Activated naive CD4-positive, alpha-beta T cell treated with anti-CD3 and anti-CD28 coated beads for 36 hours (primary cell): ENCODE measurements at regions of chrX and their contacts with region 1.

Region 1: DNA sequence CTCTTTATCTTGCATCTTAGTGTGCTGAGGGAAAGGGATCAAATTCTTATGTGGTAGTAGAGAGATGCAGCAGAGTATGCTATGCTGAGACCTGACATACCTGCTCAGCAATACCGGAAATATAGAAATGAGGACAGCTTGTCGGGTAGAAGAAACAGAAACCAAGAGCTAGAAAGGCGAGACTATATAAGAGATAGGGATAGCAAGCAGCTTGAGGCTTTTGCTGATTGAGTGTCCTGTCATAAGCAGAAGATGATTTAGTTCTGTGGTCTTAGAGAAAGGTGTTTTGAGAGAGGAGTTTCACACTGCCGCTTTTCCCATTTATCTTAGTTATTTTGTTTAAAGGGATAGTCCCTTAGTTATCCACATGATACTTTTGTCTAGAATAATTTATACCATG is 31.7 kb downstream of the USP9X start:
- DNase-seq: peak; percentile 20
- H3K4me3 Mint-ChIP-seq: peak overlapping the region; percentile 18
- H3K27ac Mint-ChIP-seq: peak overlapping the region; percentile 70
- H3K4me1 Mint-ChIP-seq: peaks cover 72% of the 10 kb centered on the region
- H3K27me3 Mint-ChIP-seq: no peaks in the 10 kb centered on the region

Region 2: GRCh38 chrX:40201329-40201885 is 915.5 kb before region 1 on chrX:
- CTCF ChIA-PET with region 1: no interaction called
- intact Hi-C with region 1: no loop called
- DNase-seq: peak; percentile 39
- H3K4me3 Mint-ChIP-seq: no peak overlapping the region
- H3K27ac Mint-ChIP-seq: no peak overlapping the region
- H3K4me1 Mint-ChIP-seq: peaks cover 13% of the 10 kb centered on the region
- H3K27me3 Mint-ChIP-seq: no peaks in the 10 kb centered on the region

Region 3: DNA sequence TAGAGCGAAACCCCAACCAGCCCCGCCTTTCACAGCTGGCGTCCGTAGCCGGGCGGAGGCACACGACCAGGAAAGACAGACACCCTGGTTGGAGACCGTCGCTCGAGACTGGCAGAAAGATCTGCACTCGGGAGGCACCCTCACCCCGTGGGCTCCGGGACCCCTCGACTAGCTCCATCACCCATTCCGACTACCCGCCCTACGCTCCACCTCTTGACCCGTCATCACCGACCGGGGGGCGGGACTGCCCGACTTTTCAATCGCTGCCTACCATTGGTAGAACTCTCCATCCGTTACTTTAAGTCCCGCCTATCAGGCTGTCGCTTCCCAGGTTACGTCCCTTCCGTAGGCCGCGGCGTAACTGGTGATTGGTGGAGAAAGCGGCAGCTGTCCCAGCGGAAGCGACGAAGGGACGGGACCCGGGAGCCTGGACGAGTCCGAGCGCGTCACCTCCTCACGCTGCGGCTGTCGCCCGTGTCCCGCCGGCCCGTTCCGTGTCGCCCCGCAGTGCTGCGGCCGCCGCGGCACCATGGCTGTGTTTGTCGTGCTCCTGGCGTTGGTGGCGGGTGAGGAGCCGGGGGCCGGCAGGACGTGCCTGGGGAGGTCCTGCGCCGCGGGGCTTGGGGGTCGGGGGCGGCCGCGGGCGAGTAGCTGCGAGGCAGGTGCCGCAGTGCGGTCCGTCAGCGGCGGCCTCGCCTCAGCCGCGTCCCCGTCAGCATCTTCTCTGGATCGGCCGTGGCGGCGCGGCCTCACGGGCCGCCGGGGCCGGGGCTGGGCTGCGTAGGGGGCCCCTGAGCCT is 536.2 kb before region 1 on chrX and contains the start of gene ATP6AP2:
- CTCF ChIA-PET with region 1: no interaction called
- intact Hi-C with region 1: loop called (anchors 10 kb)
- DNase-seq: peak; percentile 95
- H3K4me3 Mint-ChIP-seq: peak within 1 kb of the TSS; percentile 83
- H3K27ac Mint-ChIP-seq: peak within 1 kb of the TSS; percentile 85
- H3K4me1 Mint-ChIP-seq: peaks cover 26% of the 10 kb centered on the region
- H3K27me3 Mint-ChIP-seq: no peaks in the 10 kb centered on the region
- total RNA-seq, gene ATP6AP2: 47.4 to 53.9 TPM

Region 4: GRCh38 chrX:40735325-40736169 is 381.4 kb before region 1 on chrX and contains the start of gene MED14:
- CTCF ChIA-PET with region 1: no interaction called
- intact Hi-C with region 1: loop called (anchors 5 kb)
- DNase-seq: peak; percentile 90
- H3K4me3 Mint-ChIP-seq: peak within 1 kb of the TSS; percentile 85
- H3K27ac Mint-ChIP-seq: peak within 1 kb of the TSS; percentile 97
- H3K4me1 Mint-ChIP-seq: peaks cover 43% of the 10 kb centered on the region
- H3K27me3 Mint-ChIP-seq: no peaks in the 10 kb centered on the region
- total RNA-seq, gene MED14: 47.3 to 50.8 TPM

Region 5: DNA sequence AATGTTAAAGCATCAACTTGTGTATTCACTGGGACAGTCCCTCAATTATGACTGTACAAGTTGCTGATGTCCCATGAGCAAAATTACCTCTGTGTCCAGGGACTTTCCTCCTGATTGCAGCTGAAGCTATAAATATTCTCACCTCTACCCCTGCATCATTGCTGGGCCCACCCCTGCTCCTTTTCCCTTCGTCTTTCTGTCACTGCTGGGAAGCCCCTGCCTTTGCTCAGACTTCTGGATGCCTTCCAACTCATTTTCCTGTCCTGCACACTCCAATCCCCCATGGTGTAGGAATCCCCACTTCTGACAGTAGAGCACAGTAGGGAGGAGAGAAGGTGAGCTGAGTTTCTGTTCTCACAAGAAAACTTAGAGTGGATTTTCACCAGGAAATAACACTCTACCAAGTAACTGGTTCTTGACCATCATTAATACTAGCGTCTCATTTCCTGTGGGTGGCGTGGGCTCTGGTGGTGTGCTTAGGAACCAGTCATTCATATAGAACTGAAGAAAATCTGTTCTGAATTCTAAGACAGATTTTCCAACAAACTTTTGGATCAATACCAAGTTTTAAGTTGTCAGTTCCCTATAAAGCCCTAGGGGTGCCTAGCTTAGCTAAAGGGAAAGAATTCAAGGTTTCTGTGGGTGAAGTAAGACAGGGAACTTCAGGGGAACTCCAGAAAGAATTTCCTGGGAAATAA is 245.4 kb before region 1 on chrX:
- CTCF ChIA-PET with region 1: interaction called, 6 read pairs
- intact Hi-C with region 1: loop called (anchors 1 kb)
- DNase-seq: peak; percentile 72
- H3K4me3 Mint-ChIP-seq: no peak overlapping the region
- H3K27ac Mint-ChIP-seq: peak overlapping the region; percentile 88
- H3K4me1 Mint-ChIP-seq: peaks cover 12% of the 10 kb centered on the region
- H3K27me3 Mint-ChIP-seq: no peaks in the 10 kb centered on the region

Region 6: DNA sequence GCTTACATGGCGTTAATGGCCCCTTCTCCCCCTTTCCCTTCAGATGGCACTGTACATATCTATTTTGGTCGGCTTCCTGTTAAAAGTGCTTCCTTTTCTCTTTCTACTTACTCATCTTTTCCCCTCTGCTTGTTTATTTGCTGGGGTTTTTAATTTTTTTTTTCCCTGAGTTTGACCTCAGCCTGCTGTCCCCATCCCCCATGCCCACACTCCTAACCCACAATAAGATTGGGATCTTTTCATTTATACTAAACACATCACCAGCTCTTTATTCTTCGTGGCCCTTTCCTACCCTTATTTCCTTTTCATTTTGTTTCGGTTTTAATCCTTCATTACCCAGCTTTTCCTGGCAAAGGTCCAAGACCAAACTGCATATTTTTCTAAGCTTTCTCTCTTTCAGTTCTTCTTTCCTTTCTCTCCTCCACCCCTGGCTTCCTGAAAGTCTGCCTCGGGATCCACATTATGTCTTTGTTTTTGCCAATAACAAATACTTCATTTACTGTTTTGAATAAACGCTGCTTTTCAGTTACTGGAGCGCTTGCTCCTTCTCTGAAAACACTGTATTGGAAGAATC is 183.7 kb before region 1 on chrX:
- CTCF ChIA-PET with region 1: interaction called, 3 read pairs
- intact Hi-C with region 1: loop called (anchors 1 kb)
- DNase-seq: peak; percentile 26
- H3K4me3 Mint-ChIP-seq: peak overlapping the region; percentile 48
- H3K27ac Mint-ChIP-seq: peak overlapping the region; percentile 87
- H3K4me1 Mint-ChIP-seq: peaks cover 22% of the 10 kb centered on the region
- H3K27me3 Mint-ChIP-seq: no peaks in the 10 kb centered on the region

Region 7: DNA sequence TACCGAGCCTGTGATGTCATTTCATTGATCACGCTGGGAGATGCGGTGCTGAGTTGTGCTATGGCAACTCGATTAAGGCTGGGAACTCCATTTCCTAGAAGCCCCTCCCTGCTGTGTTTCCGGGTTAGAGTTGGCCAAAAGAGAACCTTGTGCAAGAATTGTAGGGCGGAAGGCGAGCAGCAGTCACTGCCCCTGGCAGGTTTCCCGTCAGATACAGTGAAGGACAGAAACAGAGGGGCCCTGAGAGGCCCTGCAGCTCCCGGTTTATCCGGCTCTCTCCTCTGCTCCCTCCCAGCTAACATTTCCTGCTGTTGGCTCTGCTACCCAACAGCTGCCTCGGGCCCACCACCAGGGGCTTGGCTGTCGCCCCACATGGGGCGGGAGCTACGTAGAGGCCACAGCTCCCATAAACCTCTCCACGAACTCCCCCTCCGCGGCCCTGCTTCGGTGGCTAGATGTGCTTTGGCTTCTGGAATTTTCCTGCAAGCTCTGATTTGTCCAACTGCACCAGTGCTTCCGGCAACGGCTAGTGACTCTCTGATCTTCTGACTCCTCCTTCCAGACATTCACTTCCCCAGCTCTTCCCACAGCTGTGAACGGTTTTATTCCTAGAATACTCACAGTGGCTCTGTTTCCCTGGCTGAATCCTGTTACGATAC is 106.6 kb before region 1 on chrX:
- CTCF ChIA-PET with region 1: no interaction called
- intact Hi-C with region 1: loop called (anchors 2 kb)
- DNase-seq: peak; percentile 78
- H3K4me3 Mint-ChIP-seq: peak overlapping the region; percentile 54
- H3K27ac Mint-ChIP-seq: peak overlapping the region; percentile 77
- H3K4me1 Mint-ChIP-seq: peaks cover 29% of the 10 kb centered on the region
- H3K27me3 Mint-ChIP-seq: no peaks in the 10 kb centered on the region

Region 8: DNA sequence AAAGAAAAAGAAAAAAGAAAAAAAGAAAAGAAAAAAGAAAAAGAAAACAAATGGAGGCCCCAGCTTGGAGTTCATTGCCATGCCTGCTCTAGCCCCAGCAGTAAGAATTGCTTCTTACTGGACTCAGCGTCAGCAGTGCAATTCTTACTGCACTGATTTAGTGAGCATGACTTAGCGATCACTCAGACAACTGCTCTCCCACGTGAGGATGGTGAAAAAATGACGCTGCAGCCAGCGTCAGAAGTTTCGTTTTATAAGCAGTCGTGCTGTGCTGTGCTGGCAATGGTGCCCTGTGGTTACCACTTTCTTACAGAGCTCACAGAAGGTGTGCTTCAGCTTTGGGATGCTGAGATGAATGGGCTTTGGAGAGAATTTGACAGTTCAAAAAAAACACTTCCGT is 148.7 kb after region 1 on chrX:
- CTCF ChIA-PET with region 1: no interaction called
- intact Hi-C with region 1: no loop called
- DNase-seq: peak; percentile 82
- H3K4me3 Mint-ChIP-seq: no peak overlapping the region
- H3K27ac Mint-ChIP-seq: no peak overlapping the region
- H3K4me1 Mint-ChIP-seq: peaks cover 8% of the 10 kb centered on the region
- H3K27me3 Mint-ChIP-seq: no peaks in the 10 kb centered on the region

Region 9: DNA sequence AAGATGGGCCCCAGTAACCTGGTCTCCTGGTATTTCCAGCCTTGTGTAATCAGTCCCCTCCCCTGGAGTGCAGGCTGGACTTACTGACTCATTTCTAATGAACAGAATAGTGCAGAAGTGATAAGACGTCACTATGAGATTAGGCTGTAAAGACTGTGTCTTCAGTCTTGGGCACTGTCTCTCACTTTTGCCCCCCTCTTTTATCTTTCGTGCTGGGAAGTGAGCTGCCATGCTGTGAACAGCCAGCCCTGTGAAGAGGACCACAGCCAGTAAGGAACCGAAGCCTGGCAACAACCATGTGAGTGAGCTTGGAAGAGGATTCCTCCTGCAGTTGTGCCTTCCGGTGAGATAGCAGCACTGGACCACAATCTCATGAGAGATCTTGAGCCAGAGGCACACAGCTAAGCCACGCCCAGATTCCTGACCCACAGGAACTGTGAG is 504.3 kb after region 1 on chrX:
- CTCF ChIA-PET with region 1: no interaction called
- intact Hi-C with region 1: no loop called
- DNase-seq: no peak
- H3K4me3 Mint-ChIP-seq: no peak overlapping the region
- H3K27ac Mint-ChIP-seq: no peak overlapping the region
- H3K4me1 Mint-ChIP-seq: no peaks in the 10 kb centered on the region
- H3K27me3 Mint-ChIP-seq: no peaks in the 10 kb centered on the region

Region 10: DNA sequence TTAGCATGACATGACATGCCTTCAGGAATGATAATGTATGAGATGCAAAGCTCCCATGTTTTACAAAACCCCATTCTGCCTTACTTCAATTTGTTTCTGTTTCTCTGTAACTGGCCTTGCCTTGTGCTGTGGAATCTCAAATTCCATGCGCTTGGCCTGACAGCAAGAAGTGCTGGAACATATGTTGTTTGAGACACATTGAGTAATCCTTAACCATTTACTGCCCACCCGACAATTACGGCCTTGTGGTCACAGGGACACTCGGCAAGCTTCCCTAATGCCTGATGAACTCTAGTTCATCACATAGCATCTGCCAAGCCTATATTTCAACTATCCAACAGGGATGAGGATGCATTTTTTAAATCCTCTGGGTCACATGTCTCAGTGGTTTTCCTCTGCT is 1032.8 kb after region 1 on chrX:
- CTCF ChIA-PET with region 1: no interaction called
- intact Hi-C with region 1: no loop called
- DNase-seq: no peak
- H3K4me3 Mint-ChIP-seq: no peak overlapping the region
- H3K27ac Mint-ChIP-seq: no peak overlapping the region
- H3K4me1 Mint-ChIP-seq: no peaks in the 10 kb centered on the region
- H3K27me3 Mint-ChIP-seq: no peaks in the 10 kb centered on the region